BJ (cell line): ENCODE measurements at regions of chr2 and their contacts with region 1.

Region 1: GRCh38 chr2:200735061-200735460 is 76.6 kb upstream of the BZW1 start:
- DNase-seq: no peak
- H3K4me3 ChIP-seq: no peak overlapping the region
- H3K27me3 ChIP-seq: peaks cover 3% of the 10 kb centered on the region; the same call in 1 of the 2 replicates
- CTCF ChIP-seq: no peak

Region 2: DNA sequence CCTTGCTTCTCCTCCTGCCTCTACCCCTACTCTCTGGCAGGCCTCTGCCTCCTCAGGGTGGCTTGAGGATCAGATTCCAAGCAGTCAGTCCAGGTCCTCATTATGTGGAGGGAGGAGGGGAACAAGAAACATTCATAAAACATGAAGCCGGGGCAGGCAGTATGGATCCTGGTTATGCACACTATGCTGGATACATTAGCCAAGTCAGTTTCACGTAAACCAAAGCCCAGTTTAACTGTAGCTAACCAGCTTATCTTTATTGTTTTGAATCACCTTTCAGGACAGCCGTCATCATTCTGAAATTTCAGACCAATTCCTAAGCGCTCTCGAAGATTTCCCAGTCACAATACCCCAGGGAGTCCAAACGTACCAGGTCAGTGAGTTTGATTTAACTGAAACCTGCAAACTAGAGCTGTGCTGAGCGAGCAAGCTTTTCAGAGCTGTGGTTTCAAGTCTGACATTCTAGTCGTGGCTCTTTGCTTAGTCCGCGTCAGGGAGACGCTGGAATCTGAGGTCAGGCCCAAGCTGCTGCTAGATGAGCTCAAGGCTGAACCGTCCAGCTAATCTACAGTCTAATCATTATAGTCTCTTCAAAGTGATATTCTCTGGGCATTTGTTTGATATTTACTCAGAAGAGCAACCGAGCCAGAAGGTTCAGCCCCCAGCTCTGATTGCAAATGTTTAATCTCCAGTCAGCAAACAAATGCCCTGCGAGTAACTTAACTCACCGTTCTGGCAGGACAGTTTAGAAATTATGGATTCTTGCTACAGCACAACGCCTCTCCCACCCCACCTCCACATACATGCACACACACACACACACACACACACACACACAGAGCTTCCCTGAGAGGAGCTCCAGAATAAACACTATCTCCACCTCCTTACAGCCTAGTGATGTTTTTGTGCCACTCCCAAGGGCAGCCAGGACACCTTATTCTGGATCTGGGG is 12.9 kb after region 1 on chr2:
- CTCF ChIA-PET with region 1: interaction called, 15 read pairs
- POLR2A ChIA-PET with region 1: no interaction called
- DNase-seq: peak; percentile 63
- H3K4me3 ChIP-seq: no peak overlapping the region
- H3K27me3 ChIP-seq: no peaks in the 10 kb centered on the region
- CTCF ChIP-seq: no peak

Region 3: GRCh38 chr2:201059961-201060755 is 325.1 kb after region 1 on chr2:
- CTCF ChIA-PET with region 1: no interaction called
- POLR2A ChIA-PET with region 1: no interaction called
- DNase-seq: no peak
- H3K4me3 ChIP-seq: no peak overlapping the region
- H3K27me3 ChIP-seq: no peaks in the 10 kb centered on the region
- CTCF ChIP-seq: no peak

Region 4: GRCh38 chr2:201451292-201452057 is 716.4 kb after region 1 on chr2 and contains the starts of genes STRADB and TRAK2:
- CTCF ChIA-PET with region 1: no interaction called
- POLR2A ChIA-PET with region 1: no interaction called
- DNase-seq: peak; percentile 82
- H3K4me3 ChIP-seq: peak within 1 kb of the TSS; percentile 70
- H3K27me3 ChIP-seq: no peaks in the 10 kb centered on the region
- CTCF ChIP-seq: peak; percentile 35
- polyA plus RNA-seq, gene STRADB: 18.2 and 31.3 TPM in 2 replicates
- polyA plus RNA-seq, gene TRAK2: 25.3 and 34.7 TPM in 2 replicates